GM12878 (cell line): ENCODE measurements at regions of chr17 and their contacts with region 1.

Region 1: GRCh38 chr17:4420692-4421131 is 13.0 kb upstream of the SPNS3 start:
- DNase-seq: peak; percentile 37
- ATAC-seq: peak; percentile 98
- H3K4me3 ChIP-seq: no peak overlapping the region
- H3K27ac ChIP-seq: no peak overlapping the region
- H3K4me1 ChIP-seq: no peaks in the 10 kb centered on the region
- H3K27me3 ChIP-seq: no peaks in the 10 kb centered on the region
- CTCF ChIP-seq: peak; percentile 89 to 93 (median 91)
- EP300 ChIP-seq: no peak
- POLR2A ChIP-seq: no peak
- RAD21 ChIP-seq: peak; percentile 91

Region 2: DNA sequence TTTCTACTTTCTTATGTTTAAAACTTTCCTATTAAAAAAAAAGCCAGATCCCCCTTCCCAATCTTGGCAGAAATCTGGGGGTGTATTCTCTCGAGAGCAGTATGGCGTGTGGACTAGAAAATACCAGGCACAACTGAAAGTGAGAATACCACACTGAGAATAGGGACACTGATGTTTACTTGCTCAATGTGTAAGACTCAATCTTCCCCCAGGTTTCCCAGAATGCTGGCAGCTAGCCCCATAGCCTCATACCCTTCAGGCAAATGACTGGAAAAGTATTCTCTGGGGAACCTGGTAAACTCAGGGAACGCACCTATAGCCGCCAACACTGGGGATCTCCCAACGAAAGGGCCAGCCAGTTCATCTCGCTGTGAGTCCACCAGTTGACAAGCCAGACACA is 293.2 kb before region 1 on chr17:
- CTCF ChIA-PET with region 1: no interaction called
- POLR2A ChIA-PET with region 1: no interaction called
- RAD21 ChIA-PET with region 1: no interaction called
- SMC1A ChIA-PET with region 1: no interaction called
- in situ Hi-C with region 1: no loop called
- intact Hi-C with region 1: no loop called
- DNase-seq: no peak
- ATAC-seq: no peak
- H3K4me3 ChIP-seq: no peak overlapping the region
- H3K27ac ChIP-seq: no peak overlapping the region
- H3K4me1 ChIP-seq: peaks cover 15% of the 10 kb centered on the region
- H3K27me3 ChIP-seq: no peaks in the 10 kb centered on the region
- CTCF ChIP-seq: no peak
- EP300 ChIP-seq: no peak
- POLR2A ChIP-seq: no peak
- RAD21 ChIP-seq: no peak

Region 3: GRCh38 chr17:4199818-4200402 is 220.8 kb before region 1 on chr17:
- CTCF ChIA-PET with region 1: interaction called, 14 read pairs
- POLR2A ChIA-PET with region 1: interaction called, 4 read pairs
- RAD21 ChIA-PET with region 1: interaction called, 16 read pairs
- SMC1A ChIA-PET with region 1: interaction called, 4 read pairs
- in situ Hi-C with region 1: loop called (anchors 5 kb)
- intact Hi-C with region 1: no loop called
- DNase-seq: no peak
- ATAC-seq: peak; percentile 81
- H3K4me3 ChIP-seq: no peak overlapping the region
- H3K27ac ChIP-seq: no peak overlapping the region
- H3K4me1 ChIP-seq: no peaks in the 10 kb centered on the region
- H3K27me3 ChIP-seq: no peaks in the 10 kb centered on the region
- CTCF ChIP-seq: peak; percentile 64 to 79 (median 72)
- EP300 ChIP-seq: no peak
- POLR2A ChIP-seq: no peak
- RAD21 ChIP-seq: peak; percentile 61

Region 4: DNA sequence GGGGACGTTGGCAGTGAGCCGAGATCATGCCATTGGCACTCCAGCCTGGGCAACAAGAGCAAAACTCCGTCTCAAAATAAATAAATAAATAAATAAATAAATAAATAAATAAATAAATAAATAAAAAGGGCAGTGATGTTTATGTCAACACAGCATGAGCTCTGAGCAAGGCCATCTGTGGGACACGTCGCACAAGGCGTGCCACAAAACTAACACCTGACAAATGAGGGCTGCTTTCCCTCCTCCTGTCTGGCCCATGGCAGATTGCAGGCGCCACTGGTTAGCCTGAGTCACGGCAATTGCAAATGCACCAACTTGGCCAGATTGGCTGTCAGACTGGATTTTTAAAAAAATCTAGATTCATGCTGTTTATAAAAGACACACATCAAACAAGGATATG is 12.9 kb before region 1 on chr17:
- CTCF ChIA-PET with region 1: interaction called, 13 read pairs
- POLR2A ChIA-PET with region 1: no interaction called
- RAD21 ChIA-PET with region 1: interaction called, 3 read pairs
- SMC1A ChIA-PET with region 1: interaction called, 3 read pairs
- in situ Hi-C with region 1: no loop called
- intact Hi-C with region 1: no loop called
- DNase-seq: no peak
- ATAC-seq: no peak
- H3K4me3 ChIP-seq: no peak overlapping the region
- H3K27ac ChIP-seq: no peak overlapping the region
- H3K4me1 ChIP-seq: peaks cover 7% of the 10 kb centered on the region
- H3K27me3 ChIP-seq: no peaks in the 10 kb centered on the region
- CTCF ChIP-seq: no peak
- EP300 ChIP-seq: no peak
- POLR2A ChIP-seq: no peak
- RAD21 ChIP-seq: no peak

Region 5: GRCh38 chr17:4436846-4437245 is 16.1 kb after region 1 on chr17:
- CTCF ChIA-PET with region 1: interaction called, 11 read pairs
- POLR2A ChIA-PET with region 1: no interaction called
- RAD21 ChIA-PET with region 1: interaction called, 3 read pairs
- SMC1A ChIA-PET with region 1: interaction called, 3 read pairs
- in situ Hi-C with region 1: no loop called
- intact Hi-C with region 1: no loop called
- DNase-seq: no peak
- ATAC-seq: no peak; the same call in 2 of the 3 replicates
- H3K4me3 ChIP-seq: no peak overlapping the region
- H3K27ac ChIP-seq: no peak overlapping the region
- H3K4me1 ChIP-seq: peaks cover 12% of the 10 kb centered on the region
- H3K27me3 ChIP-seq: no peaks in the 10 kb centered on the region; a peak in 1 of 4 replicates
- CTCF ChIP-seq: no peak
- EP300 ChIP-seq: no peak
- POLR2A ChIP-seq: no peak
- RAD21 ChIP-seq: no peak

Region 6: DNA sequence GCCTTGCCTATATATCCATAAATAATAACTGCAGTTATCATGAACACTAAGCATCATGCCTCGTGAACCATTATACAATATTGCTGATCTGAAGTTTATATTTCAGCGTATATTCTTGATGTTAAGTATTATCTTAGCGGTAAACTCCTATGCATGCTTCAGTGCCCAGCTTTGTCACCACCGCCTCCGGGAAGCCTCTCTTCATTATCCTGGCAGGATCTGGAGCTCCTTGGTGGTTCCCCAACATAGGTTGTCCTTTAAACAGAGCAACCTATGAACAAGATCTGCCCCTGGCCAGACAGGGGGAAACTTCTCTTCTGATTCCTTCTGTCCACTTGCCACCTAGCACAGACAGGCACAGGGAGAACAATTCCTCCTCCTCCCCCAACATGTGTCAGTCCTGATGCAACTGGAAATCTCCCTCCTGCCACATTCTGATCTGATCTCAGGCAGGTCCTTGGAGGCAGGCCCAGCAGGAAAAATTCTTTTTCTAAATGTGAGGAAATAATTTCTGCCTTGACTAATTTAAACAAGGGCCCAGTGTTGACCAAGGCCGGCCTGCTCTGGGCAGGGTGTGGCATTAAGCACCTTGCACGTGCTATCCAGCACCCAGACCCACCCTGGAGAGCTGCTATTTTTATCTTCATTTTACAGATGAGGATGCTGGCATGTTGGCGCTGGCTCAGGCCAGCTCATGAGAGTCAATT is 100.3 kb after region 1 on chr17:
- CTCF ChIA-PET with region 1: interaction called, 4 read pairs
- POLR2A ChIA-PET with region 1: no interaction called
- RAD21 ChIA-PET with region 1: interaction called, 7 read pairs
- SMC1A ChIA-PET with region 1: interaction called, 3 read pairs
- in situ Hi-C with region 1: no loop called
- intact Hi-C with region 1: loop called (anchors 10 kb)
- DNase-seq: no peak
- ATAC-seq: no peak
- H3K4me3 ChIP-seq: no peak overlapping the region
- H3K27ac ChIP-seq: no peak overlapping the region
- H3K4me1 ChIP-seq: peaks cover 16% of the 10 kb centered on the region
- H3K27me3 ChIP-seq: no peaks in the 10 kb centered on the region
- CTCF ChIP-seq: no peak
- EP300 ChIP-seq: no peak
- POLR2A ChIP-seq: no peak
- RAD21 ChIP-seq: no peak

Region 7: GRCh38 chr17:4625181-4625617 is 204.5 kb after region 1 on chr17:
- CTCF ChIA-PET with region 1: interaction called, 8 read pairs
- POLR2A ChIA-PET with region 1: no interaction called
- RAD21 ChIA-PET with region 1: interaction called, 5 read pairs
- SMC1A ChIA-PET with region 1: interaction called, 17 read pairs
- in situ Hi-C with region 1: no loop called
- intact Hi-C with region 1: loop called (anchors 2 kb)
- DNase-seq: no peak
- ATAC-seq: no peak
- H3K4me3 ChIP-seq: no peak overlapping the region
- H3K27ac ChIP-seq: no peak overlapping the region
- H3K4me1 ChIP-seq: no peaks in the 10 kb centered on the region
- H3K27me3 ChIP-seq: peaks cover 0 to 3% of the 10 kb centered on the region in 2 experiments; a peak in 2 of 4 replicates
- CTCF ChIP-seq: no peak
- EP300 ChIP-seq: no peak
- POLR2A ChIP-seq: no peak
- RAD21 ChIP-seq: no peak

Region 8: DNA sequence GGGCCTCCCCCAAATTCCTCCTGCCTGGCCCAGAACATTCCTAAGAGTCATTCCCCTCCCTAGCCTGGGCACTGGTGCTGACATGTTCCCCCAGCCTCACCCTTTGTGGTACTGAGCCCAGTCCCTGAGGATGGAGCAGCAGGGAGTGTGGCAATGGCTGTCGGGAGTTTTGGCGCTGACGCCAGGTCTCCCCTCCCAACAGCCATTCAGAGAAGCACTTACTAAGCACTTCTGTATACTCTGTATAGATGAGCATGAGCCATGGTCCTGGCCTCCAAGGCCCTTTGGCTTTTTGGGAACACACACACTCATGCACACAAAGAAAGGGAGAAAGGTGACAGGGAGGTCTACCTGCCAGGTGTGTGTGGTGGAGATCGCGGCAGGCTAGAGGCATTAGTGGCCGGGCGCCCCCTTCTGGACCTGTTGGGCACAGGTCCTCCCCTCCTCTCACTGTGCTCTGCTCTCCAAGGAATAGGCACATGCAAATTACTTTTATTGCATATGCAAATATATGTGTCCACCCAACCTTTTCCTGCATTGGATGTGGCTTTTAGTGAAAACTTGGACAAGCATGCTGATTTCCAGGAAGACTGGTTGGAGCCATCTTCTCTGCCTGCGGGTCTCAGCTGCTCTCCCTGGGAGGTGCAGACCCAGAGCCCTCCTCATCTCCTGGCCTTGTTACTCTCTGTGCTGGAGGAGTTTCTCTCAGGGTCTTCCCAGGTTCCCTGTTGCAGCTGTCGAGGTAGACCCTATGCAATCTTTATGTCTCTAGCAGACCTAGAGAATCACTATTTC is 461.2 kb after region 1 on chr17:
- CTCF ChIA-PET with region 1: no interaction called
- POLR2A ChIA-PET with region 1: no interaction called
- RAD21 ChIA-PET with region 1: no interaction called
- SMC1A ChIA-PET with region 1: no interaction called
- in situ Hi-C with region 1: no loop called
- intact Hi-C with region 1: loop called (anchors 10 kb)
- DNase-seq: no peak
- ATAC-seq: peak; percentile 96
- H3K4me3 ChIP-seq: no peak overlapping the region
- H3K27ac ChIP-seq: no peak overlapping the region
- H3K4me1 ChIP-seq: no peaks in the 10 kb centered on the region
- H3K27me3 ChIP-seq: no peaks in the 10 kb centered on the region
- CTCF ChIP-seq: peak; percentile 84 to 88 (median 87)
- EP300 ChIP-seq: no peak
- POLR2A ChIP-seq: no peak
- RAD21 ChIP-seq: peak; percentile 65